Dorsolateral prefrontal cortex (tissue), 120 donors: ENCODE measurements at regions of chr2 and their contacts with region 1.

Region 1: GRCh38 chr2:40448468-40449079 is 3.3 kb downstream of the SLC8A1 start:
- DNase-seq: peak in 1 of 10 donors; percentile 39
- H3K4me3 ChIP-seq: peak overlapping the region in 53 of 59 donors; percentile 2 to 79 (median 65)
- H3K27ac ChIP-seq: peak overlapping the region in 29 of 59 donors; percentile 9 to 92 (median 84)
- H3K27me3 ChIP-seq: peaks cover 0 to 29% (median 0%) of the 10 kb centered on the region in 45 donors
- CTCF ChIP-seq: peak in 54 of 56 donors; percentile 15 to 66 (median 49)

Region 2: DNA sequence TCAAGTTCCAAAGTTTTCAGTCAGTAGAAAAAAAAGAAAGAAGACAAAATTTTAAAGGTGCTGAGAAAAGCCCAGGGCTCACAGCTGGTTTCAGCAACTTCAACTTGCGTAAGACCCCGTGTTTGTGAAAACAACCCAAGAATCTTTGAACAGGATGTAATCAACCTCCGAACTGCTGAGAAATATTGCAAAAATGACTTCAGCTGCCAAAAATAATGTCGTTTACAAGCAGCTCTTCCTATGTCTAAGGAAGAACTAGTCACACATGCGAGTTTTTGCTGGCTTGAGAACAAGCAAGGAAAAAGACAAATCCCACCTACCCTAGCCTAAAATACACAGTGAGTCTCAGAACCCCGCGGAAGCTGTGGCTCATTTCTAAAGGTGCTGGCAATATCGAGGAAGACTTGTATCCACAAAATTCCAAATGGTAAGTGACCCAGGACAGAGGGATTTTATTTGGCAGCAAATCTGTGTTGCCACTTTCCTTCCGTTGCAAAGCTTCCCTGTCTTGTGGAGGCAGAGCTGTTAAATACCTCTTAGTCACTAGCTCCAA is 63.2 kb after region 1 on chr2:
- intact Hi-C with region 1: no loop called
- DNase-seq: no peak
- H3K4me3 ChIP-seq: peak overlapping the region in 56 of 59 donors; percentile 2 to 57 (median 36)
- H3K27ac ChIP-seq: peak overlapping the region in 45 of 59 donors; percentile 5 to 82 (median 45)
- H3K27me3 ChIP-seq: no peaks in the 10 kb centered on the region
- CTCF ChIP-seq: no peak

Region 3: DNA sequence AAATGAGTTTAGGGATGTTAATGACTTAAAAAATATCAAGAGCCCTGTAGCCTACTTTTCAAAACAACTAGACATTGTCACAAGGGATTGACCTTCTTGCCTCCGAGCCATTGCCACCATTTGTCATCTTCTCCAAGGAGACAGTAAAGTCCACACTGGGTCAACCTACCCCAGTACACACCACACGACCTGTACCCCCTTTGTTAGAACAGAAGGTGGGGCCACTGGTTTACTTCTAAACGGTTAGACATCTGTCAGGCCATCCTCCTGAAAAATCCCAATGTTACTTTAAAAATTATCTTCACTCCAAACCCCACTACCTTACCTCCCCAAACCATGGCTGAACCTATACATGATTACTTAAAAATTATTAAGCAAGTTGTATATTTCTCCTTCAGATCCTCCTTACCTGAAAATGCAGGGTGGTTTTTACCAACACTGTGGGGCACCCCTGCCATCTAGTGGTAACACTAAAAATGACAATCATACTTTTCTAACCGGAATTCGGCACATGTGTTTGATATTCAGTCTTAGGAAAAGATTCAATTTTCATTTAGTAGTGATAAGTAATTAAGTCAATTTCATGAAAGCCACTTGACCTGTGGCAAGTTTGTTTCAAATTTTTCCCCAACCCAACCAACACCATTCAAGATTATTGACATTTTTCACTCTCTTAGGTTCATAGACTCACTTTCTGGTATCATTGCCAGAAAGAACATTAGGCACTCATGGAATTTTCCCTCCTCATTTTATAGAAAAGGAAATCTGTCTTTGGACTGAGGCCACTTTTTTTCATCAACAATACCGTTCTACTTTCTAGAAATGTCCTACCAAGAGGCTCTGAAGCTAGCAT is 1334.0 kb after region 1 on chr2:
- intact Hi-C with region 1: loop called in 1 of 2 experiments (anchors 10 kb)
- DNase-seq: peak in 1 of 10 donors; percentile 9
- H3K4me3 ChIP-seq: no peak overlapping the region
- H3K27ac ChIP-seq: peak overlapping the region in 6 of 59 donors; percentile 20 to 60 (median 34)
- H3K27me3 ChIP-seq: peaks cover 0 to 4% (median 0%) of the 10 kb centered on the region in 45 donors
- CTCF ChIP-seq: peak; percentile 68 to 92 (median 80)